ENCODE measurements at regions of chr11 and their contacts with region 1.

Region 1: DNA sequence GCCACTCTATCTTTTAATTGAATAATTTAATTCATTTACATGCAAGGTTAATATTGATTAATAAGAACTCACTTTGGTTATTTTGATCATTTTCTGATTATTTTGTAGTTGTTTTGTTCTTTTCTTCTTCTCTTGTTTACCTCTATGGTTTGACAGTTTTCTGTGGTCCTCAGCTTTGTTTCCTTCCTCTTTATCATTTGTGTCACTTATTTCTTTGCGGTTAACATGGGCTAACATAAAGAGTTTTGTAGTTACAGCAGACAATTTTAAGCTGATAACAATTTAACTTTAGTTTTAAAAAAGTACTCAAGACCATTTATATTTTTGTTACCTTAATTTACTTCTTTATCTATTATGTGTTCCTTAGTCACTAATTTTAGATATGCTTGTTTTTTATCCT is 1032.8 kb upstream of the RAG2 start:
- DNase-seq: no peak
- ATAC-seq: peak in 2 of 3 donors; percentile 62 to 81
- H3K4me3 ChIP-seq: no peak overlapping the region
- H3K4me3 Mint-ChIP-seq: peak overlapping the region; percentile 85
- H3K27ac ChIP-seq: peak overlapping the region; percentile 42
- H3K27ac Mint-ChIP-seq: peak overlapping the region; percentile 72 to 88
- H3K4me1 ChIP-seq: peaks cover 6% of the 10 kb centered on the region
- H3K4me1 Mint-ChIP-seq: peaks cover 56 to 64% of the 10 kb centered on the region in 2 donors
- H3K27me3 ChIP-seq: no peaks in the 10 kb centered on the region
- H3K27me3 Mint-ChIP-seq: no peaks in the 10 kb centered on the region
- CTCF ChIP-seq: no peak

Region 2: DNA sequence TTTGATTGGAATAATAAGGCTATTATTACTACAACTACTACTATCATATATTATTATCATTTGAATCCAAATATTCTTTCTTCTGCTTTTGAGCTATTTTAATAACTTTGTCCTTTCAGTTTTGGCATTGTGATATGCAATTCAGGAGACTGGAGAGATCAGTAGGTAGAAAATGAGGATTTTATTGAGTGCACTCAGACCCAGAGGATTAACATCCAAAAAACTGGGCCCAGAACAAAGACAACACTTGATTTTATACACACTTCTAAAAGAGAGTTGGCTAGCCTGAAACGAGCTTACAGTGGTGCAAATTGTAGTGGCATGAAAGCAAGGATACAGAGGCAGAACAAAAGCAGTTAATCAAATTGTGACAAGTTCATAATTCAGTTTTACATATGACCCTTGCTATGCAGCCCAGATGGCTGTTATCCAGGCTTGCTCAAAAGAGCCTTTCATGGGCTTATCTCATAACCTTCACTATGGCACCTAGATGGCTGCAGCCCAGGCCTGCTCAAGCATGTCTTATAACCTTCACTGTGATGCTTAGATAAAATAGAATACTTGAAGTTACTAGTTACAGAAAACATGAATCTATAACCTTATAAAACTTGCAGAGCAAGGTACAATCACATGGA is 236.5 kb before region 1 on chr11:
- intact Hi-C with region 1: no loop called
- DNase-seq: no peak
- ATAC-seq: no peak
- H3K4me3 ChIP-seq: no peak overlapping the region
- H3K4me3 Mint-ChIP-seq: no peak overlapping the region
- H3K27ac ChIP-seq: no peak overlapping the region
- H3K27ac Mint-ChIP-seq: no peak overlapping the region
- H3K4me1 ChIP-seq: no peaks in the 10 kb centered on the region
- H3K4me1 Mint-ChIP-seq: no peaks in the 10 kb centered on the region
- H3K27me3 ChIP-seq: no peaks in the 10 kb centered on the region
- H3K27me3 Mint-ChIP-seq: no peaks in the 10 kb centered on the region
- CTCF ChIP-seq: no peak

Region 3: GRCh38 chr11:37504060-37504611 is 126.7 kb before region 1 on chr11:
- intact Hi-C with region 1: loop called (anchors 5 kb)
- DNase-seq: no peak
- ATAC-seq: peak; percentile 80 to 92 (median 82)
- H3K4me3 ChIP-seq: no peak overlapping the region
- H3K4me3 Mint-ChIP-seq: peak overlapping the region; percentile 30
- H3K27ac ChIP-seq: no peak overlapping the region
- H3K27ac Mint-ChIP-seq: peak overlapping the region in 1 of 2 donors; percentile 30
- H3K4me1 ChIP-seq: peaks cover 7% of the 10 kb centered on the region
- H3K4me1 Mint-ChIP-seq: peaks cover 34 to 35% of the 10 kb centered on the region in 2 donors
- H3K27me3 ChIP-seq: no peaks in the 10 kb centered on the region
- H3K27me3 Mint-ChIP-seq: no peaks in the 10 kb centered on the region
- CTCF ChIP-seq: no peak

Measured in natural killer cell (primary cell).